MCF 10A (cell line): ENCODE measurements at regions of chr1 and their contacts with region 1.

Region 1: DNA sequence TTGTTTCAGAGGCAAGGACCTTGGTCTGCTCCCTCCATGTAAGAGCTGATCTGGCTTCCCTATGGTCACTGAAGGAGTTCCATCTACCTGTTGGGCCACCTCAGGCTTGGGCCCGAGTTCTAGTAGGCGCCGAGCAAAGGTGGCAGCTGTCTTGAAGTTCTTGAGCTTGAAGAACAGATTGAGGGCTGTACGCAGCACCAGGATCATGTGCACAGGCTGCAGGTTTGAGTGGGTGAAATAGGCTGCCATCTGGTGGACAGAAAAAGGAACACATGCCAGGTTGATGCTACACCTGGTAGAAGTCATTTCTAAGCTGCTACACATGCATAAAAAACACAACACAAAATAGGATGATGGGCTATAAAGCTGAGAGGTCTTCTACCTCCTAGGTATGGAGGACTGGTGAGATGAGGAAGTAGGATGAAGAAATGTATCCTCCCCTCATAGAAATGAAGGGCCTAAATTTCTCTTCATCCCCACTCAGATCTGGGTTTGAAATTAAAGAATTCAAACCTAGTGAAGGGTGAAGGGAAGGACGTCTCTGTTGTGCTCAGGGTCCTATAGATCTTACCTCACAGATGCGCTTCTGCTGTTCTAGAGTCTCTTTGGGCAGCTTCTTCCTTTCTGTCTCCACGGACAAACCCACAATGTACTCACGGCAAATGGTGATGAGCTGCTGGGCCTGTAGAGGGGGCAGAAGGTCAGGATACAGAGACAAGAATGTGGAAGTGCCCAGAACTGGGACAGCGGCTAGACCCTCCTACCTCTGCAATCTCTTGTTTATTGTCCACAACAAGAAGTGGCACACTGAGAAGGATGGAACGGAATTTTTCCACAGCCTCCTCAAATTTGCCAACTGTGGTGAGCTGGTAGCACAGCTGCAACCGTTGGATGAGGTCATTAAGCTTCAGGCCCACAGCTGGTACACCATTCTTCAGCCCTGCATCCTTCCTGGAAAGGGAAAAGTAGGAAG is 6.6 kb upstream of the PEX19 start:
- DNase-seq: peak; percentile 79
- H3K4me3 Mint-ChIP-seq: no peak overlapping the region
- H3K27ac Mint-ChIP-seq: peak overlapping the region; percentile 61
- H3K4me1 Mint-ChIP-seq: no peaks in the 10 kb centered on the region
- H3K27me3 Mint-ChIP-seq: no peaks in the 10 kb centered on the region
- CTCF ChIP-seq: peak; percentile 89

Region 2: GRCh38 chr1:159924981-159925712 is 366.4 kb before region 1 on chr1 and contains the start of gene TAGLN2:
- CTCF ChIA-PET with region 1: no interaction called
- POLR2A ChIA-PET with region 1: no interaction called
- intact Hi-C with region 1: no loop called
- DNase-seq: peak; percentile 97
- H3K4me3 Mint-ChIP-seq: peak within 1 kb of the TSS; percentile 81
- H3K27ac Mint-ChIP-seq: peak within 1 kb of the TSS; percentile 99
- H3K4me1 Mint-ChIP-seq: peaks cover 44% of the 10 kb centered on the region
- H3K27me3 Mint-ChIP-seq: no peaks in the 10 kb centered on the region
- CTCF ChIP-seq: no peak
- total RNA-seq, gene TAGLN2: 464 and 483 TPM in 2 replicates

Region 3: GRCh38 chr1:160046494-160047110 is 244.9 kb before region 1 on chr1:
- CTCF ChIA-PET with region 1: interaction called, 15 read pairs
- POLR2A ChIA-PET with region 1: no interaction called
- intact Hi-C with region 1: no loop called
- DNase-seq: peak; percentile 73
- H3K4me3 Mint-ChIP-seq: no peak overlapping the region
- H3K27ac Mint-ChIP-seq: no peak overlapping the region
- H3K4me1 Mint-ChIP-seq: peaks cover 16% of the 10 kb centered on the region
- H3K27me3 Mint-ChIP-seq: peaks cover 63% of the 10 kb centered on the region
- CTCF ChIP-seq: peak; percentile 83

Region 4: GRCh38 chr1:160117709-160118183 is 173.8 kb before region 1 on chr1:
- CTCF ChIA-PET with region 1: interaction called, 11 read pairs
- POLR2A ChIA-PET with region 1: no interaction called
- intact Hi-C with region 1: no loop called
- DNase-seq: peak; percentile 30
- H3K4me3 Mint-ChIP-seq: no peak overlapping the region
- H3K27ac Mint-ChIP-seq: no peak overlapping the region
- H3K4me1 Mint-ChIP-seq: peaks cover 8% of the 10 kb centered on the region
- H3K27me3 Mint-ChIP-seq: no peaks in the 10 kb centered on the region
- CTCF ChIP-seq: no peak

Region 5: DNA sequence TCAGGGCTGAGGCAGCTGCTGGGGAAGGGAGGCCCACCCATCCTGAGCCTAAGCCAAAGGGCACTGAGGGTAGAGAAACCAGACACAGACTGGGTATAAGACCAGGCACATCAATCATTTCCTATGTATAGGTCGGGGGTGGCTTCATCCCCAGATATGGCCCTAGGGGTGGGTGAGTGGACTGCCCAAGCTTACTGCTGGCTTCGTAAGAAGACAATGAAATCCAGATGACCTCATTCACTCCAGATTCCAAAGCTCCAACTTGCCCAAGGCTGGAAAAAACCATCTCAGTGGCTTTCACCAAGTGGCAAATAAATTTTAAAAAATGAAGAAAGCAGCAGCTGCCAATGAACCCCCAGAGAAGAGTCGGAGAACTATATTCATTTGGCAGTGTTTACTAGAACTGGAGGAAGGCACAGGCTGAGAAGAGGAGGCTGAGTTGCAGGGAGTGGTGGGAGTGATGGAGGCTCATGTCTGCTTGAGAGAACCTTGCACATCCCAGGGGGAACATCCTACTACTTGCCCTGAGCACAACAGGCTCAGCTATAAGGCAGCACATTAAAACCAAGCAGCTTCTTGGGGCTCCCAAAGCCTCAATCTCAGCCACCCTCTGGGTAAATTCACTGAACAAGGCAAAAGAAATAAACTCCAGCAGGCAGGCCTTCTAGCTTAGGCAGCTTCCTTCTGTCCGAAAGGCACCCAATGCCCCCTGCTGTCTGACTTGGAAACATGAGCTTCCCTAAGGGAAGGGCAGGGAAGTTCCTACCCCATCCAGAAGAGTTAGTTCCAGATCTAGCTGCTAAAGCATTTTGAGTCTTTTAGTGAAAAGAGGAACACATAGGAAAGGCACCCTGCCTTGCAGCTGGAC is 72.2 kb before region 1 on chr1:
- CTCF ChIA-PET with region 1: interaction called, 50 read pairs
- POLR2A ChIA-PET with region 1: no interaction called
- intact Hi-C with region 1: no loop called
- DNase-seq: peak; percentile 61
- H3K4me3 Mint-ChIP-seq: no peak overlapping the region
- H3K27ac Mint-ChIP-seq: no peak overlapping the region
- H3K4me1 Mint-ChIP-seq: peaks cover 7% of the 10 kb centered on the region
- H3K27me3 Mint-ChIP-seq: no peaks in the 10 kb centered on the region
- CTCF ChIP-seq: peak; percentile 47

Region 6: DNA sequence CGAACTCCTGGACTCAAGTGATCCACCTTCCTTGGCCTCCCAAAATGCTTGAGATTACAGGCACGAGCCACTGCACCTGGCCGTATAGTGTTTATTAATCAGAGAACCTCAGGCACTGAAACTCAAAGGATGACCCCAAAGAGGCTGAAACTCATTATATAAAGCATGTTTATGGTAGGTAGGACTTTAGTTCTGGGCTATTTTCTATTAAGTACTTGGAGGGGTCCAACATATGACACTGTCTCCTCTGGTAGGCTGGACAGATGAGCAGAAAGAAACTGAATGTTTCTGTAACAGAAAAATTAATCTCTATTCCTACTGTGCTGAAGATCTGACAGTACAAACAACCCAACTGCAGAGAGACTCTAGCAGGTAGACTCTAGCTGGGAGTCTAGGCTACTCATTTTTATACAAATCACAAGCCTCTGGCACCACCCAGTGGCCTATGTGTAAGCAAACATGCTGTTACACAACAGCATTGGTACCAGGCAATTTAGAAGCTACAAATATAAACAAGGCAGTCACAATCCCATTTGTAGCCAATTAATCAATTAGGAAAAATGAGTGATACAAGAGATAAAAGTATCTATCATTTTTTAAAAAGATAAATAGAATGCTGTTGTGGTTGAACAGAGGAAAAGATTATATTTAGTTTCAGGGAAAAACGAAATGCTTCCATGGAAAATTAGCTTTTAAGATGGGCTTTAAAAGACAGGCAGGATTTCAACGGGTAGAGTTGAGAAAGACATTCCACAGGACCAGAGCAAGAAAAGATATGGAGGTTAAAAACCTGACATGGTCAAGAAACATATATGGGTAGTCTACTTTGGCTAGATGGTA is 39.6 kb before region 1 on chr1:
- CTCF ChIA-PET with region 1: interaction called, 133 read pairs
- POLR2A ChIA-PET with region 1: interaction called, 8 read pairs
- intact Hi-C with region 1: no loop called
- DNase-seq: peak; percentile 87
- H3K4me3 Mint-ChIP-seq: no peak overlapping the region
- H3K27ac Mint-ChIP-seq: peak overlapping the region; percentile 75
- H3K4me1 Mint-ChIP-seq: peaks cover 25% of the 10 kb centered on the region
- H3K27me3 Mint-ChIP-seq: no peaks in the 10 kb centered on the region
- CTCF ChIP-seq: peak; percentile 85

Region 7: DNA sequence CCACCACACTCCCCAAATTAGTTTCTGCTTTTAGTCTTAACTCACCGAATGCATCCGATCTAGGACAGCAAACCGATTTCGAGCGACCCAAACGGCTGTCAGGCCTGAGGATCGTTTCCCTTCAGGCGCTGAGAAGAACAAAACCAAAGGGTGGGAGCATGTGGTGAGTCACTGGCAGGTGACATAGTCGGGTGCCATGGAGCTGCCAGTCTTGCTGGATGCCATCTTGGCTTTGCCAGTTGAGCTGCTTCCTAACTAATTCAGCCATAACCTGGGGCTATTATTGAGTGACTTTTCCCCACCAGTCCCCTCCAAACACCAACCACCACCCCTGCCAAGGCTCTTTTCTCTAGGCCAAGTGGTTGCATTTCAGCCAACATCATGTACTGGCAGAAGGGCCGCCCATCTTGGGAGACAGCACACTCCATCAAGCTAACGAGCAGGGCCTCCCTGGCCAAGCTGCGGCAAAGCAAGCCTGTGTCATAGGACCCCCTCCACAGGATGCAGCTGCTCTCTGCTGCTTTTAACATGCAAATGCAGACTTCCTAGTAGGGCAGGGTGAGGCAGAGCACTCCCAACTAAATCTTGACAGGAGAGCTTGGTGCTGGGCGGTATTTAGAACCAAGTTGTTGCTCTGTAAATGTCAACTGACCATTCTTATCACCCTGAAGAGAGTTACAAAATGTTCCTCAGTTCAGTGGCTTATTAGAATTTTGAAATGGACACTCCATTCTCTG is 15.8 kb after region 1 on chr1:
- CTCF ChIA-PET with region 1: interaction called, 132 read pairs
- POLR2A ChIA-PET with region 1: interaction called, 4 read pairs
- intact Hi-C with region 1: no loop called
- DNase-seq: no peak
- H3K4me3 Mint-ChIP-seq: no peak overlapping the region
- H3K27ac Mint-ChIP-seq: no peak overlapping the region
- H3K4me1 Mint-ChIP-seq: peaks cover 16% of the 10 kb centered on the region
- H3K27me3 Mint-ChIP-seq: no peaks in the 10 kb centered on the region
- CTCF ChIP-seq: no peak

Region 8: GRCh38 chr1:160354388-160354985 is 63.0 kb after region 1 on chr1:
- CTCF ChIA-PET with region 1: interaction called, 13 read pairs
- POLR2A ChIA-PET with region 1: no interaction called
- intact Hi-C with region 1: no loop called
- DNase-seq: peak; percentile 39
- H3K4me3 Mint-ChIP-seq: no peak overlapping the region
- H3K27ac Mint-ChIP-seq: no peak overlapping the region
- H3K4me1 Mint-ChIP-seq: no peaks in the 10 kb centered on the region
- H3K27me3 Mint-ChIP-seq: no peaks in the 10 kb centered on the region
- CTCF ChIP-seq: peak; percentile 46

Region 9: DNA sequence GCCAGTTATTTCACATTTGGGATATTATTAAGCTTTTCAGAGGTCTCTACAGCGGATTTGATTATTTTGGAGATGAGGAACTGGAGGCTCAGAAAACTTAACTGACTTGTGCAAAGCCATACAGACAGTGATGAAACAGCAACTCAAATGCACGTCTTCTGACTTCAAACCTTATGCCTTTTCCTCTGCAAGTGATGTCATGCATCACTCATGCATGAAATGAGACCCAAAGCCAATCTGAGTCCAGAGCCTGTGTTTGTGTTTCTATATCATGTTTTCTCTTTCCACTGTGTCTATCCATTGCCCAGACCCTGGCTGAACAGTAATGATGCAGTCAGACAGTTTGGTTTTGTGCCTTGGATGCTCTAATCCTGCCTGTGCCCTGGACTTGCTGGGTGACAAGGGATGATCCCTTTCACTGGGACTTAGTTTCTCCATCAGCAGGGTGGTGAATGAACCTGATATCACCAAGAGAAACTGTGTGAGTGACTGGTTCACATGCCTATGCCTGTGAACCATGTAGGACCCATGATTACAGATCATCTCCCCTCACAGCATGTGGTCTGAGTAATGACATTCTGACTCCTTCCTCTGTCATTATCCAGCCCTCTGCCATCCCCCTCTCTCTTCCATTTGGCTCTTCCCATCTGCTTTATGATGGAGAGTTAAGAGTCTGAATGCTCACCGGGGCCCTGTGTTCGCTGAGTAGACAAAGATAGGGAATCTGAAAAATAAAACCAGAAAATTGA is 198.2 kb after region 1 on chr1:
- CTCF ChIA-PET with region 1: no interaction called
- POLR2A ChIA-PET with region 1: no interaction called
- intact Hi-C with region 1: no loop called
- DNase-seq: no peak
- H3K4me3 Mint-ChIP-seq: no peak overlapping the region
- H3K27ac Mint-ChIP-seq: no peak overlapping the region
- H3K4me1 Mint-ChIP-seq: no peaks in the 10 kb centered on the region
- H3K27me3 Mint-ChIP-seq: peaks cover 36% of the 10 kb centered on the region
- CTCF ChIP-seq: no peak